PC-3 (cell line): ENCODE measurements at regions of chr15 and their contacts with region 1.

Region 1: GRCh38 chr15:95175914-95176658 is 944.7 kb downstream of the MCTP2 start:
- DNase-seq: no peak
- ATAC-seq: no peak
- H3K4me3 ChIP-seq: no peak overlapping the region
- H3K27ac ChIP-seq: no peak overlapping the region
- H3K4me1 ChIP-seq: peaks cover 8% of the 10 kb centered on the region
- H3K27me3 ChIP-seq: no peaks in the 10 kb centered on the region
- CTCF ChIP-seq: no peak

Region 2: GRCh38 chr15:94882071-94882712 is 293.9 kb before region 1 on chr15:
- CTCF ChIA-PET with region 1: no interaction called
- POLR2A ChIA-PET with region 1: no interaction called
- intact Hi-C with region 1: no loop called
- DNase-seq: no peak
- ATAC-seq: no peak
- H3K4me3 ChIP-seq: no peak overlapping the region
- H3K27ac ChIP-seq: no peak overlapping the region
- H3K4me1 ChIP-seq: no peaks in the 10 kb centered on the region
- H3K27me3 ChIP-seq: no peaks in the 10 kb centered on the region
- CTCF ChIP-seq: no peak

Region 3: GRCh38 chr15:94910166-94910565 is 265.9 kb before region 1 on chr15:
- CTCF ChIA-PET with region 1: no interaction called
- POLR2A ChIA-PET with region 1: no interaction called
- intact Hi-C with region 1: no loop called
- DNase-seq: no peak
- ATAC-seq: no peak
- H3K4me3 ChIP-seq: no peak overlapping the region
- H3K27ac ChIP-seq: no peak overlapping the region
- H3K4me1 ChIP-seq: no peaks in the 10 kb centered on the region
- H3K27me3 ChIP-seq: no peaks in the 10 kb centered on the region
- CTCF ChIP-seq: no peak

Region 4: GRCh38 chr15:95252404-95252803 is 76.3 kb after region 1 on chr15:
- CTCF ChIA-PET with region 1: no interaction called
- POLR2A ChIA-PET with region 1: no interaction called
- intact Hi-C with region 1: loop called (anchors 2 kb)
- DNase-seq: peak; percentile 38
- ATAC-seq: peak; percentile 85
- H3K4me3 ChIP-seq: no peak overlapping the region
- H3K27ac ChIP-seq: peak overlapping the region; percentile 47
- H3K4me1 ChIP-seq: peaks cover 16% of the 10 kb centered on the region
- H3K27me3 ChIP-seq: no peaks in the 10 kb centered on the region
- CTCF ChIP-seq: no peak